ENCODE measurements at regions of chr12 and their contacts with region 1.

Region 1: GRCh38 chr12:108531929-108532848 is 17.1 kb downstream of the FICD start:
- DNase-seq: no peak
- H3K4me3 ChIP-seq: no peak overlapping the region
- H3K27ac ChIP-seq: no peak overlapping the region
- H3K4me1 ChIP-seq: no peaks in the 10 kb centered on the region
- H3K27me3 ChIP-seq: no peaks in the 10 kb centered on the region

Region 2: GRCh38 chr12:108442067-108442466 is 90.1 kb before region 1 on chr12:
- CTCF ChIA-PET with region 1: no interaction called
- POLR2A ChIA-PET with region 1: no interaction called
- DNase-seq: no peak
- H3K4me3 ChIP-seq: no peak overlapping the region
- H3K27ac ChIP-seq: no peak overlapping the region
- H3K4me1 ChIP-seq: peaks cover 0 to 6% (median 3%) of the 10 kb centered on the region in 4 experiments
- H3K27me3 ChIP-seq: peaks cover 0 to 5% (median 0%) of the 10 kb centered on the region in 5 experiments

Region 3: DNA sequence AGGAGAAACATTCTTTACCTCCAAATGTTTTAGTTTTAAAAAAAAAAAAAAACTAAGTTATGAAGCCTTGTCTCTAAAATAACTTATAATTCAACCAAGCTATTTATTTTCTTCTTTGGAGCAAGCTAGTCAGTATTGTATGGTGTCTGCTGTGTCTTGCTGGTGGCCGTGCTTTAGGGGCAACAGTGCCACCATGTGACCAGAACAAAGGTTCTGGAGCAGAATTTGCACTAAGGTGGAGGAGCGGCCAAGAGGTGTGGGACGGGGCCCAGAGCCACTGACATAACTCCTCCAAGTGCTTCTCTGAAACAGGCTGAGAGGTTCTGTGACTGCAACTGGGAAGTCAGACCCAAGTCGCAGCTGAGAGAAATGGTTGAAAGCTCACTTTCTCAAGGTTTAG is 12.6 kb before region 1 on chr12:
- CTCF ChIA-PET with region 1: interaction called, 13 read pairs
- POLR2A ChIA-PET with region 1: interaction called, 3 read pairs
- DNase-seq: peak; percentile 15 to 25 (median 19)
- H3K4me3 ChIP-seq: no peak overlapping the region
- H3K27ac ChIP-seq: no peak overlapping the region
- H3K4me1 ChIP-seq: peaks cover 0 to 12% (median 10%) of the 10 kb centered on the region in 4 experiments
- H3K27me3 ChIP-seq: no peaks in the 10 kb centered on the region